K562 (cell line): ENCODE measurements at regions of chr10 and their contacts with region 1.

Region 1: DNA sequence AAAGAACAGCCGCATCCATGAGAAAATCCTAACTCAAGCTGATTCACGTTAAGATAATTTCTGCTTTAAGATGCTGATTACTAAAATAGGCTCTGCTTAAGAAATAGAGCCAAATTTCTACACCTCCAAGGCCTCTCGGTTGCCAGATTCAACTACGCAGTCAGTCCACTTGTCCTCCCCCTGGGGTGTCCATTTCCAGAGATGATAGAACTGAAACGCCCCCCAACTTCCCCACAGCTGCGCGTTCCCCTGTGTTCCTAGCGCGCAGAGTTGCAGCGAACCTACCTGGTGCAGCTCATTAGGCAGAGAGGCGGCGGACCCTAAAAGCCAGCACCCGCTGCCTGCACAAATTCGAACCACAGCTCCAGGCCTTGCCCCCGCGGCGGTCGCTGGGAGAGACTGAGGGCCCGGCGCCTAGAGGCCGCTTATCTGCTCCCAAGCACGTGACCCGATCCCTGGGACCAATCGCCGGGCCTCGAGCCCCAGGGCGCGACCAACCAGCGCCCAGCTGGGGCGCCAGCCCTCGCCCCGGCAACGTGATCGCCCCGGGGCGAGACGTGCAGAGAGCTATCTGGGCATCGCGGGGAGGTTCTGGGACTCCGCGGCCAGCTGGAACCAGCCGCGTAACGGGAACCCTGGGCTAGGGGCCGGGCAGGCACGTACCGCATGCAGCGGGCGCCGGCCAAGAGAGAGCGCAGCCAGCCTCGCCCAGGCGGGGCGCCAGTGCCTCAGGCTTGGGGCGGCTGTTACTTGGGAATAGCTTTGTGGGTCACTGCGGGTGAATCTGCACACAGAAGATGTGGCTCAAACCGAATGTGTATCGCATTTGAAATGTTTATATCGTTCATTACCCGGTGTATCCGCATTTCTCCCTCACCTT is at the start of gene PPP1R3C:
- DNase-seq: no peak
- ATAC-seq: no peak
- H3K4me3 ChIP-seq: no peak within 1 kb of the TSS
- H3K27ac ChIP-seq: no peak within 1 kb of the TSS
- H3K4me1 ChIP-seq: peaks cover 5 to 19% of the 10 kb centered on the region in 2 experiments; a peak in 4 of 5 replicates
- H3K27me3 ChIP-seq: no peaks in the 10 kb centered on the region
- CTCF ChIP-seq: no peak
- EP300 ChIP-seq: no peak
- POLR2A ChIP-seq: no peak
- RAD21 ChIP-seq: no peak
- polyA plus RNA-seq, gene PPP1R3C: 0.13 to 0.14 TPM

Region 2: DNA sequence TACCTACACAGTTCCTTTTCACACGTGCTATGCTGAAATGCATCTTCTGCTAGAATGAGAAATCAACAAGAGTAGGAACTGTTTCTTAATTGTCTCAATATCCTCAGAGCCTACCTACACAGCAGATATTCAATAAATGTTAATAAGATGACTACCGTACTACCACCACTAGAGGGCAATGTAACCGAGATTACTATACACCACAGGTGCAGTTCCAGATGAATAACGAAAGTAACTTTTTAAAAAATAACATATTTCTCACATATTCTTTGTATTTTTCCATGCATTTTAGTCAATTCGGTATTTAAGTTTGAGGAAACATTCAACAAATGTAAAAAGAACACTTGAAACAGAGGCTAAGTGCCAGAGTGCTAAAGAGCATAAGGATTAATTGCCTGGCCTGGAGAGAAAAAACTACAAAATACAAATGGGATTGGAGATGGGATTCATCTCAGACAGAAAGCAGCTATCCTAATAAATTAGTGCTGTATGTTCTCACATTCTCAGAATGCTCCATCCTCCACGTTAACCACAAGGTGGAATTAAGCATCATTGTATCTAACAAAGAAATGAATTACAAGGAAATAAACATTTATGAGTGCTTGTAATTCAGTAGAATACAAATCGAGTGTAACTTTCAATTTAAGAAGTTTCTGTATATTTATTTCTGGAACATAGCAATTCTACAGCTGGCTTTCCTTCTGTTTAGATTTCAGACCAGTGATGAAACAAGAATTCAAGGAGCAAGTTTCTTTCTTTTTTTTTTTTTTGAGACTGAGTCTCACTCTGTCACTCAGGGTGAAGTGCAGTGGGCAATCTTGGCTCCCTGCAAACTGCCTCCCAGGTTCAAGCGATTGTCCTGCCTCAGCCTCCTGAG is 243.0 kb before region 1 on chr10:
- CTCF ChIA-PET with region 1: interaction called, 4 read pairs
- POLR2A ChIA-PET with region 1: no interaction called
- in situ Hi-C with region 1: no loop called
- intact Hi-C with region 1: loop called (anchors 2 kb)
- DNase-seq: peak; percentile 15 to 63 (median 24)
- ATAC-seq: peak; percentile 87
- H3K4me3 ChIP-seq: no peak overlapping the region
- H3K27ac ChIP-seq: no peak overlapping the region
- H3K4me1 ChIP-seq: no peaks in the 10 kb centered on the region
- H3K27me3 ChIP-seq: no peaks in the 10 kb centered on the region; a peak in 1 of 5 replicates
- CTCF ChIP-seq: peak in 2 of 3 experiments; percentile 27 to 52; a peak in 3 of 6 replicates
- EP300 ChIP-seq: no peak
- POLR2A ChIP-seq: no peak
- RAD21 ChIP-seq: peak; percentile 55 to 74; a peak in 3 of 4 replicates

Region 3: GRCh38 chr10:91493313-91493712 is 139.6 kb before region 1 on chr10:
- CTCF ChIA-PET with region 1: interaction called, 11 read pairs
- POLR2A ChIA-PET with region 1: no interaction called
- in situ Hi-C with region 1: no loop called
- intact Hi-C with region 1: loop called (anchors 1 kb)
- DNase-seq: peak in 2 of 4 experiments; percentile 3 to 27
- ATAC-seq: no peak
- H3K4me3 ChIP-seq: no peak overlapping the region
- H3K27ac ChIP-seq: no peak overlapping the region
- H3K4me1 ChIP-seq: no peaks in the 10 kb centered on the region
- H3K27me3 ChIP-seq: no peaks in the 10 kb centered on the region
- CTCF ChIP-seq: peak in 1 of 3 experiments; percentile 41; a peak in 3 of 6 replicates
- EP300 ChIP-seq: no peak
- POLR2A ChIP-seq: no peak
- RAD21 ChIP-seq: peak; percentile 53 to 58

Region 4: GRCh38 chr10:91556691-91557566 is 76.0 kb before region 1 on chr10:
- CTCF ChIA-PET with region 1: interaction called, 21 read pairs
- POLR2A ChIA-PET with region 1: no interaction called
- in situ Hi-C with region 1: loop called (anchors 5 kb)
- intact Hi-C with region 1: loop called (anchors 1 kb)
- DNase-seq: no peak
- ATAC-seq: no peak
- H3K4me3 ChIP-seq: no peak overlapping the region
- H3K27ac ChIP-seq: no peak overlapping the region
- H3K4me1 ChIP-seq: no peaks in the 10 kb centered on the region
- H3K27me3 ChIP-seq: no peaks in the 10 kb centered on the region
- CTCF ChIP-seq: no peak
- EP300 ChIP-seq: no peak
- POLR2A ChIP-seq: no peak
- RAD21 ChIP-seq: no peak

Region 5: GRCh38 chr10:91604553-91605534 is 28.1 kb before region 1 on chr10:
- CTCF ChIA-PET with region 1: no interaction called
- POLR2A ChIA-PET with region 1: interaction called, 4 read pairs
- in situ Hi-C with region 1: no loop called
- intact Hi-C with region 1: loop called (anchors 2 kb)
- DNase-seq: no peak
- ATAC-seq: no peak
- H3K4me3 ChIP-seq: no peak overlapping the region
- H3K27ac ChIP-seq: no peak overlapping the region
- H3K4me1 ChIP-seq: peaks cover 7 to 23% of the 10 kb centered on the region in 2 experiments; a peak in 4 of 5 replicates
- H3K27me3 ChIP-seq: no peaks in the 10 kb centered on the region
- CTCF ChIP-seq: no peak
- EP300 ChIP-seq: no peak
- POLR2A ChIP-seq: no peak
- RAD21 ChIP-seq: no peak

Region 6: DNA sequence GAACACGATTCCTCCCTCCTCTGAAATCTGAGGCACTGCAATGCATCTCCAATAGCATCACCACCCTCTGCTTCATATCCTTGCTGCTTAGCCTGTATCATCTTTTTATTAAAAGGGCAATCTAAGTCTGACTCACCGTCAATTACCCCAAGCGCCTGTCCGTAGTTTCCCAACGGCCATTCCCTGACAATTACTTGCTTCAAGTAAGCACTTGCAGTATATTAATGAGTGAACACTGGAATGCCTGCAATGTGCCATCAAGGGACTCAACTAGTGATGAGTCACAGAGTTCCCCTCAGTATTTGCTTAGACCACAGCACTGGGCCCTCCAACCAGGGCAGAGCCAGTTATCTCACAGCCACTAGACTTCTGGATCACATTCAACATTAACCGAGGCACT is 19.5 kb after region 1 on chr10:
- CTCF ChIA-PET with region 1: no interaction called
- POLR2A ChIA-PET with region 1: no interaction called
- in situ Hi-C with region 1: no loop called
- intact Hi-C with region 1: no loop called
- DNase-seq: no peak
- ATAC-seq: no peak
- H3K4me3 ChIP-seq: no peak overlapping the region
- H3K27ac ChIP-seq: no peak overlapping the region
- H3K4me1 ChIP-seq: no peaks in the 10 kb centered on the region
- H3K27me3 ChIP-seq: no peaks in the 10 kb centered on the region
- CTCF ChIP-seq: no peak
- EP300 ChIP-seq: no peak
- POLR2A ChIP-seq: no peak
- RAD21 ChIP-seq: no peak